Right cardiac atrium (tissue), 5 donors: ENCODE measurements at regions of chr12 and their contacts with region 1.

Region 1: DNA sequence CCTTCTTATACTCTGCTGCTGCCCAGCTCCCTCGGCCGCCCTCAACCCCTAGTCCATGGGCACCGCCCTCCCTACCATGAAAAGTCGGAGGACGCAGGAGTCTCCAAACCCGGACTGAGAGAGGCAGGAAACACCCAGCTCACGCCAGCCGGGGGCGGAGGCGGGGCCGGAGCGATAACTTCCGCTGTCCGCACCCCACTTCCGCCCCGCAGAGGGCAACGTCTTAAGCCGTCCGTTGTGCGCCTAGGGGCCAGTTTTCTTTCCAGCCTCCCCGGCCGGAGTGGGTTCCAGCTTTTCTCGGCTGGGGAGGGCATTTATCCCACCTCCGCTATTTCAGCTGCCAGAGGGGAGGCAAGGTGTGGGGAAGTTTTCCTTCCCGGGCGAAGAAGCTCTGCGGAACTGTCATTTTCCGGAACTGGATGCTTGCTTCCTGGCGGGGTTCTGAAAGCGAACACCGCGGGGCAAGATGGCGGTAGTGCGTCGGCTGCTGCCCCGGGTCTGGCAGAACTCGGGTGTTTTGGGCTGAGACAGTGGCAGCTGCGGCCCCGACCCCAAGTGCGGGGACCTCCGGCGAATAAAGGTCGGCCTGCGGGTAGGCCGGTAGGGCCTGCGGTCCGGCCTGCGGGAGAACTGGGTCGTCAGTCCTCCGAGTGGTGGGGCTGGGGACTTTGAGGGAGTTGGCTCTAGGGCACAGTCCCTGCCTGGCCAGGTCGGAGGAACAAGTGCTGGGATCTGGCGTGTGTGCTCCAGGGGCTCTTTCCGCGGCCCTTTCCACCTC is at the starts of genes KCTD10 and UBE3B:
- DNase-seq: peak; percentile 91 to 96 (median 95)
- ATAC-seq: peak; percentile 98
- H3K4me3 ChIP-seq: peak within 1 kb of the TSS; percentile 88
- H3K27ac ChIP-seq: peak within 1 kb of the TSS; percentile 98
- H3K4me1 ChIP-seq: peaks cover 6% of the 10 kb centered on the region
- H3K27me3 ChIP-seq: no peaks in the 10 kb centered on the region
- total RNA-seq, gene KCTD10: 28.3 to 76.9 (median 32.9) TPM
- total RNA-seq, gene UBE3B: 39.9 to 53.2 (median 46.8) TPM

Region 2: DNA sequence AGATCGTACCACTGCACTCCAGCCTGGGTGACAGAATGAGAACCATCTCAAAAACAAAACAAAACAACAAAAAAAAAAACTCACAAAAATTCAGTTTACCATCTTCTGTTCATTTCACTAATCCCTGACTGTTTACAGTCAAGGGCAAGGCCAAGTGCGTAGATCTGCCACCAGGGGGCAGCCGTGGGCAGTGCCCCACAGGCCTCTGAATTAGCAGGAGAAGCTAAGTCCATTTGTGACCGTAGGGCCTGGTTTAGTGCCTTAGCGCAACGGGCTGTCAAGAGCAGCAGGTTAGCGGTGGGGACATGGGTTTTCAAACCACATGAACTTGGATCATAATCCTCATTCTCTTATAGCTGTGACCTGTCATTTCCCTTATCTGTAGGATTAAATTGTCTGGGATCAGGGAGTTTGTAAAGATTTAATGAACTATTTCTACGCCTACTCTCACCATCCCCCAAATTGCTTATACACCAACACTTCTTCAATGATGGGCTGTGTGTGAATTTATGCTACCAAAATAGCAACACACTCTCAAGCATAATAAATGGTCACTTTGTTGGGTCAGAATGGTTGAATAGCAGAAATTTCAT is 49.2 kb before region 1 on chr12:
- intact Hi-C with region 1: loop called in 2 of 4 experiments (anchors 5 kb)
- DNase-seq: peak; percentile 80 to 93 (median 93)
- ATAC-seq: peak; percentile 87 to 89
- H3K4me3 ChIP-seq: no peak overlapping the region
- H3K27ac ChIP-seq: no peak overlapping the region
- H3K4me1 ChIP-seq: no peaks in the 10 kb centered on the region
- H3K27me3 ChIP-seq: no peaks in the 10 kb centered on the region

Region 3: GRCh38 chr12:109435428-109436187 is 41.8 kb before region 1 on chr12:
- intact Hi-C with region 1: loop called (anchors 5 kb)
- DNase-seq: no peak
- ATAC-seq: no peak
- H3K4me3 ChIP-seq: no peak overlapping the region
- H3K27ac ChIP-seq: no peak overlapping the region
- H3K4me1 ChIP-seq: no peaks in the 10 kb centered on the region
- H3K27me3 ChIP-seq: no peaks in the 10 kb centered on the region